ENCODE measurements at regions of chr9 and their contacts with region 1.

Region 1: DNA sequence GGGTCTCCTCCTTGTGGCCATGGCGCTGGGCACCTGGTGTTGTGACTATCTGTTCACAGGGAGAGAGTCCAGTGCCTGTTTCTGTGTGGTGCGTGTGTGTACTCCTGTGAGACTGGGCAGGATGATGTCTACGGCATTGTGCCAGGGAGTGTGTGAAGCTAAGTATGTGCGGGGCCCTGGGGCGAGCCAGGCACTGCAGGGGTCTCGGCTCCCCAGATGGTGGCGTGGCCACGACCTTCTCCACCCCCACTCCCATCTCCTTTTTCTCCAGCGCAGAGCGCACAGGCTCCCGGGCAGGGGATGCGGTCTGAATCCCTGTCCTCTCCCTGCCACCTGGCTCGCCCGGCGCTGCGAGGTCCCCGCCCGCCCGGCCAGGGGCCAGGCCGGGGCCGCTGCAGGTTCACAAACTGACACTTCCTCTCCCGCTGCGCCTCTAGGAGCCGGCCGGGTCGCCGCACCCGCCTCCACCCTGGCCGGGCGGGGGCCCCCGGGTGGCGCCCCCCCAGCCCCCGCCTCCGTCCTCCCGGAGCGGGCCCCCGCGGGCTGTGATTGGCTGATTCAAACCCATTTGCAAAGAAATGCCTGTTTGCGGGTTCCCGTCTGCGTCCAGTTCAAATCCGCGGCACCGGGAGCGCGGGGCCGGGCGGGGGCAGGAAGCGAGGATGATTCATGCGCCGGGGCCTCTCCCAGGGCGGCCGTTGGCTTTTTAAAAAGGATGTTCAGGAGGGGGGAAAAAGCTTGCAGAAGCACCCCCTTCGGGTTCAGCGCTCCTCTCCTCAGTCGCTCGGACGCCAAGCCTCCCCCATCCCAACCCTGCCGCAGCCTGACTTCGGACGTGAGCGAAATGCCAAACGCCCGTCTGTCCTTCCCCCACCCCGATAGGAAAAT is 790 bp downstream of the PHF19 start:
- DNase-seq: peak; percentile 53 to 93 (median 84)
- ATAC-seq: peak; percentile 49
- H3K4me3 ChIP-seq: peak overlapping the region; percentile 64
- H3K4me3 Mint-ChIP-seq: peak overlapping the region; percentile 85
- H3K27ac ChIP-seq: peak overlapping the region; percentile 87 to 93
- H3K27ac Mint-ChIP-seq: peak overlapping the region; percentile 84
- H3K4me1 ChIP-seq: peaks cover 83% of the 10 kb centered on the region
- H3K4me1 Mint-ChIP-seq: peaks cover 75% of the 10 kb centered on the region
- H3K27me3 ChIP-seq: no peaks in the 10 kb centered on the region
- H3K27me3 Mint-ChIP-seq: no peaks in the 10 kb centered on the region
- CTCF ChIP-seq: no peak

Region 2: DNA sequence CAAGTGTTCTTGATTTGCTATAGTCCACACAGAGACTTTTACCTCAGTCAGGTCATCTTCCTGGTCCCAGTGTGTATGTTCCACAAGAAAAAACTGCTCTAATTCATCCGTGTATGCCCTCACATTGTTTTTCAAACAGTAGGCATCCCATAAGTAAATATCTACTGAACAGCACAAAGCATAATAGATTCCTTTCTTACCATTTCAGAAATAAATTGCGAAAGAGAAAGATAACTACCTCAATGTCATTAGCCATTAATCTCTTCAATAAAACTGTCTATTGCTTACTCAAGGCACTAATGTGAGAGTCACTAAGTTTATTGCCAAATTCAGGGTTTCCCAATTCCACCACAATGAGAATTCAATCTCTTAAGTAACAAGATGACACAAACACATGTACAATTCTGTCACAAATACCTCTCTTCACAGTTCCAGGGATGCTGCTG is 92.6 kb before region 1 on chr9:
- CTCF ChIA-PET with region 1: no interaction called
- POLR2A ChIA-PET with region 1: no interaction called
- intact Hi-C with region 1: no loop called
- DNase-seq: peak in 2 of 14 experiments; percentile 45 to 55
- ATAC-seq: no peak
- H3K4me3 ChIP-seq: no peak overlapping the region
- H3K4me3 Mint-ChIP-seq: no peak overlapping the region
- H3K27ac ChIP-seq: no peak overlapping the region
- H3K27ac Mint-ChIP-seq: no peak overlapping the region
- H3K4me1 ChIP-seq: peaks cover 15% of the 10 kb centered on the region
- H3K4me1 Mint-ChIP-seq: peaks cover 68% of the 10 kb centered on the region
- H3K27me3 ChIP-seq: no peaks in the 10 kb centered on the region
- H3K27me3 Mint-ChIP-seq: no peaks in the 10 kb centered on the region
- CTCF ChIP-seq: no peak

Region 3: GRCh38 chr9:120904061-120904977 is 28.1 kb after region 1 on chr9:
- CTCF ChIA-PET with region 1: interaction called, 3 read pairs
- POLR2A ChIA-PET with region 1: interaction called, 24 read pairs
- intact Hi-C with region 1: no loop called
- DNase-seq: peak; percentile 54 to 94 (median 70)
- ATAC-seq: peak; percentile 91
- H3K4me3 ChIP-seq: no peak overlapping the region
- H3K4me3 Mint-ChIP-seq: peak overlapping the region; percentile 35
- H3K27ac ChIP-seq: peak overlapping the region; percentile 92 to 93
- H3K27ac Mint-ChIP-seq: peak overlapping the region; percentile 99
- H3K4me1 ChIP-seq: peaks cover 80% of the 10 kb centered on the region
- H3K4me1 Mint-ChIP-seq: peaks cover 88% of the 10 kb centered on the region
- H3K27me3 ChIP-seq: no peaks in the 10 kb centered on the region
- H3K27me3 Mint-ChIP-seq: no peaks in the 10 kb centered on the region
- CTCF ChIP-seq: no peak

Region 4: DNA sequence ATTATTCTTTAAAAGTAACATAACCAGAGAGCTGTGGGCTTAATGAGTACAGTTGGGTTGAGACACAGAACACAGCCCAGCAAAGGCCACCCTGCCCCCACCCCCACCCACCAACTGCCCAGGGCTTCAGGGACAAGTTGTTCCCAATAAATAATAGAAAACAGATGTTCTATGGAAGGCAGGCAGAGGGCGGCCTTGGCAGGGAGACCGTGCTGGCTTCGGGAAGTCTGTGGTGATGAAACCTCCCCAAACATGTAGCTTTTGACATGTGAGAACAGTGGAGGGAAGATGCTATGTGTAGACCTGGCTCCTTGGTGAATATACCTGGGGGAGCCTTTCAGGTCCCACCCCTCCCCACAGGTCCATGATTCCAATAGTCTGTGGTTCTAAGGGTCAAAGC is 40.4 kb after region 1 on chr9:
- CTCF ChIA-PET with region 1: interaction called, 3 read pairs
- POLR2A ChIA-PET with region 1: interaction called, 284 read pairs
- intact Hi-C with region 1: loop called in 1 of 2 experiments (anchors 5 kb)
- DNase-seq: no peak
- ATAC-seq: no peak
- H3K4me3 ChIP-seq: no peak overlapping the region
- H3K4me3 Mint-ChIP-seq: no peak overlapping the region
- H3K27ac ChIP-seq: peak overlapping the region; percentile 43
- H3K27ac Mint-ChIP-seq: peak overlapping the region; percentile 90
- H3K4me1 ChIP-seq: peaks cover 96% of the 10 kb centered on the region
- H3K4me1 Mint-ChIP-seq: peaks cover 88% of the 10 kb centered on the region
- H3K27me3 ChIP-seq: no peaks in the 10 kb centered on the region
- H3K27me3 Mint-ChIP-seq: no peaks in the 10 kb centered on the region
- CTCF ChIP-seq: no peak

Region 5: GRCh38 chr9:120936011-120936763 is 60.0 kb after region 1 on chr9:
- CTCF ChIA-PET with region 1: interaction called, 9 read pairs
- POLR2A ChIA-PET with region 1: interaction called, 284 read pairs
- intact Hi-C with region 1: loop called (anchors 1 to 2 kb)
- DNase-seq: peak; percentile 79 to 95 (median 88)
- ATAC-seq: peak; percentile 64
- H3K4me3 ChIP-seq: no peak overlapping the region
- H3K4me3 Mint-ChIP-seq: peak overlapping the region; percentile 46
- H3K27ac ChIP-seq: peak overlapping the region; percentile 45 to 100
- H3K27ac Mint-ChIP-seq: peak overlapping the region; percentile 100
- H3K4me1 ChIP-seq: peaks cover 56% of the 10 kb centered on the region
- H3K4me1 Mint-ChIP-seq: peaks cover 57% of the 10 kb centered on the region
- H3K27me3 ChIP-seq: no peaks in the 10 kb centered on the region
- H3K27me3 Mint-ChIP-seq: no peaks in the 10 kb centered on the region
- CTCF ChIP-seq: peak; percentile 94

Measured in CD4-positive, alpha-beta T cell (primary cell).